CD8-positive, alpha-beta T cell (primary cell): ENCODE measurements at regions of chr7 and their contacts with region 1.

Region 1: GRCh38 chr7:99504603-99505323 is at the start of gene ZKSCAN5:
- DNase-seq: peak; percentile 95 to 99 (median 97)
- ATAC-seq: peak; percentile 87
- H3K4me3 ChIP-seq: peak within 1 kb of the TSS; percentile 87 to 93
- H3K4me3 Mint-ChIP-seq: peak within 1 kb of the TSS; percentile 99
- H3K27ac ChIP-seq: peak within 1 kb of the TSS; percentile 67 to 96
- H3K27ac Mint-ChIP-seq: peak within 1 kb of the TSS; percentile 97
- H3K4me1 ChIP-seq: peaks cover 29% of the 10 kb centered on the region
- H3K4me1 Mint-ChIP-seq: peaks cover 39% of the 10 kb centered on the region
- H3K27me3 ChIP-seq: no peaks in the 10 kb centered on the region
- H3K27me3 Mint-ChIP-seq: no peaks in the 10 kb centered on the region
- CTCF ChIP-seq: no peak
- total RNA-seq, gene ZKSCAN5: 6.0 to 6.2 TPM

Region 2: GRCh38 chr7:99374103-99375064 is 130.4 kb before region 1 on chr7 and contains the start of gene ARPC1B:
- CTCF ChIA-PET with region 1: no interaction called
- POLR2A ChIA-PET with region 1: interaction called, 3 read pairs
- intact Hi-C with region 1: loop called in 1 of 2 experiments (anchors 5 kb)
- DNase-seq: peak; percentile 69 to 94 (median 86)
- ATAC-seq: peak; percentile 55
- H3K4me3 ChIP-seq: peak within 1 kb of the TSS; percentile 70 to 90
- H3K4me3 Mint-ChIP-seq: peak within 1 kb of the TSS; percentile 84
- H3K27ac ChIP-seq: peak within 1 kb of the TSS; percentile 84 to 91
- H3K27ac Mint-ChIP-seq: peak within 1 kb of the TSS; percentile 96
- H3K4me1 ChIP-seq: peaks cover 55% of the 10 kb centered on the region
- H3K4me1 Mint-ChIP-seq: peaks cover 36% of the 10 kb centered on the region
- H3K27me3 ChIP-seq: no peaks in the 10 kb centered on the region
- H3K27me3 Mint-ChIP-seq: no peaks in the 10 kb centered on the region
- CTCF ChIP-seq: no peak
- total RNA-seq, gene ARPC1B: 68.5 to 70.5 TPM

Region 3: GRCh38 chr7:99472561-99473243 is 32.1 kb before region 1 on chr7 and contains the start of gene ZNF789:
- CTCF ChIA-PET with region 1: no interaction called
- POLR2A ChIA-PET with region 1: interaction called, 25 read pairs
- intact Hi-C with region 1: loop called (anchors 1 kb)
- DNase-seq: peak; percentile 96 to 99 (median 98)
- ATAC-seq: peak; percentile 97
- H3K4me3 ChIP-seq: peak within 1 kb of the TSS; percentile 75 to 93
- H3K4me3 Mint-ChIP-seq: peak within 1 kb of the TSS; percentile 98
- H3K27ac ChIP-seq: peak within 1 kb of the TSS; percentile 60 to 88
- H3K27ac Mint-ChIP-seq: peak within 1 kb of the TSS; percentile 96
- H3K4me1 ChIP-seq: peaks cover 19% of the 10 kb centered on the region
- H3K4me1 Mint-ChIP-seq: peaks cover 36% of the 10 kb centered on the region
- H3K27me3 ChIP-seq: no peaks in the 10 kb centered on the region
- H3K27me3 Mint-ChIP-seq: no peaks in the 10 kb centered on the region
- CTCF ChIP-seq: no peak
- total RNA-seq, gene ZNF789: 12.9 to 14.1 TPM

Region 4: GRCh38 chr7:99558306-99559174 is 53.8 kb after region 1 on chr7 and contains the start of gene ZNF655:
- CTCF ChIA-PET with region 1: no interaction called
- POLR2A ChIA-PET with region 1: interaction called, 38 read pairs
- intact Hi-C with region 1: loop called (anchors 1 kb)
- DNase-seq: peak; percentile 83 to 97 (median 93)
- ATAC-seq: peak; percentile 81
- H3K4me3 ChIP-seq: peak within 1 kb of the TSS; percentile 72 to 97
- H3K4me3 Mint-ChIP-seq: peak within 1 kb of the TSS; percentile 98
- H3K27ac ChIP-seq: peak within 1 kb of the TSS; percentile 98 to 99
- H3K27ac Mint-ChIP-seq: peak within 1 kb of the TSS; percentile 98
- H3K4me1 ChIP-seq: peaks cover 40% of the 10 kb centered on the region
- H3K4me1 Mint-ChIP-seq: peaks cover 57% of the 10 kb centered on the region
- H3K27me3 ChIP-seq: no peaks in the 10 kb centered on the region
- H3K27me3 Mint-ChIP-seq: no peaks in the 10 kb centered on the region
- CTCF ChIP-seq: no peak
- total RNA-seq, gene ZNF655: 177 to 186 TPM

Region 5: GRCh38 chr7:99616359-99617191 is 111.8 kb after region 1 on chr7 and contains the start of gene ZSCAN25:
- CTCF ChIA-PET with region 1: no interaction called
- POLR2A ChIA-PET with region 1: interaction called, 12 read pairs
- intact Hi-C with region 1: loop called (anchors 1 to 2 kb)
- DNase-seq: peak; percentile 66 to 93 (median 86)
- ATAC-seq: peak; percentile 97
- H3K4me3 ChIP-seq: peak within 1 kb of the TSS; percentile 78 to 94
- H3K4me3 Mint-ChIP-seq: peak within 1 kb of the TSS; percentile 97
- H3K27ac ChIP-seq: peak within 1 kb of the TSS; percentile 86 to 87
- H3K27ac Mint-ChIP-seq: peak within 1 kb of the TSS; percentile 98
- H3K4me1 ChIP-seq: peaks cover 25% of the 10 kb centered on the region
- H3K4me1 Mint-ChIP-seq: peaks cover 45% of the 10 kb centered on the region
- H3K27me3 ChIP-seq: no peaks in the 10 kb centered on the region
- H3K27me3 Mint-ChIP-seq: no peaks in the 10 kb centered on the region
- CTCF ChIP-seq: no peak
- total RNA-seq, gene ZSCAN25: 54.1 to 54.7 TPM